MCF 10A (cell line): ENCODE measurements at regions of chr7 and their contacts with region 1.

Region 1: DNA sequence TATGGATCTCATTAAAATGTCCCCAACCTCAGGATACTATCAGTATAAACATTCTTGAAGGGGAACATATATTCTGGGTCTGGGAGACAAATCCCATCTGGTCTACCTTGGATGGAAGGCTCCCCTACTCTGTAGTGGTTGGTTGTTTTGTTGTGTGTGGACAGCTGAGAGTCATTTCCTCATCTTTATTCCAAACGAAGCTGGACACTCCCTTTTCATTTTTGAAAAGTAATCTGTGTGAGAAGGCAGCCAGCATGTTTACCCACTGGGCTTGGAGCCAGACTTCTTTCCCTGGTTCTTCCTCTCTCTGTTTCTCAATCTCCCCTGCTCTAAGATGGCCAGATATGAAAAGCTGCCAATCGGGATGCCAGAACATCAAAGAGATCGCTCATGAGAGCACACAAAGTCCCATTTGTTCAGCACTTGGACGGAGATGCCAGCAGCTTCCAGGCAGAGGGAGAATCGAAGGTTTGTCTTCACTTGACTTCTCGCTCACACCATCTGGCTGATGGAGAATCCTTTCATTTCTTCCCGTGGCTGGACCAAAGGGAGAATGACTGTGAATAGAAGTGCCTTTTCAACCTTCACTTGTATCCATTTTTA is 108.1 kb upstream of the AGR3 start:
- DNase-seq: peak; percentile 99
- H3K4me3 Mint-ChIP-seq: peak overlapping the region; percentile 70
- H3K27ac Mint-ChIP-seq: peak overlapping the region; percentile 78
- H3K4me1 Mint-ChIP-seq: peaks cover 24% of the 10 kb centered on the region
- H3K27me3 Mint-ChIP-seq: no peaks in the 10 kb centered on the region
- CTCF ChIP-seq: no peak

Region 2: GRCh38 chr7:16801111-16801542 is 188.8 kb before region 1 on chr7:
- CTCF ChIA-PET with region 1: no interaction called
- POLR2A ChIA-PET with region 1: no interaction called
- intact Hi-C with region 1: no loop called
- DNase-seq: peak; percentile 91
- H3K4me3 Mint-ChIP-seq: no peak overlapping the region
- H3K27ac Mint-ChIP-seq: no peak overlapping the region
- H3K4me1 Mint-ChIP-seq: peaks cover 22% of the 10 kb centered on the region
- H3K27me3 Mint-ChIP-seq: no peaks in the 10 kb centered on the region
- CTCF ChIP-seq: peak; percentile 33

Region 3: GRCh38 chr7:17009007-17009719 is 19.3 kb after region 1 on chr7:
- CTCF ChIA-PET with region 1: interaction called, 13 read pairs
- POLR2A ChIA-PET with region 1: interaction called, 18 read pairs
- intact Hi-C with region 1: no loop called
- DNase-seq: peak; percentile 53
- H3K4me3 Mint-ChIP-seq: no peak overlapping the region
- H3K27ac Mint-ChIP-seq: peak overlapping the region; percentile 69
- H3K4me1 Mint-ChIP-seq: peaks cover 29% of the 10 kb centered on the region
- H3K27me3 Mint-ChIP-seq: no peaks in the 10 kb centered on the region
- CTCF ChIP-seq: peak; percentile 26